PC-3 (cell line): ENCODE measurements at regions of chr5 and their contacts with region 1.

Region 1: GRCh38 chr5:164048359-164048926 is 543.0 kb downstream of the MAT2B start:
- DNase-seq: peak; percentile 23
- ATAC-seq: no peak
- H3K4me3 ChIP-seq: no peak overlapping the region
- H3K27ac ChIP-seq: no peak overlapping the region
- H3K4me1 ChIP-seq: no peaks in the 10 kb centered on the region
- H3K27me3 ChIP-seq: no peaks in the 10 kb centered on the region
- CTCF ChIP-seq: peak; percentile 45; the same call in 1 of the 2 replicates

Region 2: DNA sequence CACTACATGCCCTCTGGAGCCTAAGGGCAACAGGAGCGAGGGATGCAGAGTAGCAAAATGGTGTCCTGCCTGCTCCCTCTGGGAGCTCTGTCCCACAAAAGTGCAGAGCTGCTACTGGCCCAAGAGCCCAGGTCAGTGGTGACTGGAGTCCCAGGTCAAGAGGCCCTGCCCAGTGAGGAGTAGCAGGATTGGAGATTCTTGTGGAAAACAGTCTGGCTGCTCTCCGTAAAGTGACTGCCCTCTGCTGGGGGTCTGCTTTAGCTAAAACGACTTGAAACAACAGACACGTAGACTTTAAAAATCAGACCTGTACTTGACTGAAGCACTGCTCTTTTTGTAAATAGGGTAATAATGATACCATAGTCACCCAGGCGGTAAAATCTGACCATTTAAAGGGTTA is 374.0 kb after region 1 on chr5:
- CTCF ChIA-PET with region 1: no interaction called
- POLR2A ChIA-PET with region 1: no interaction called
- intact Hi-C with region 1: loop called (anchors 1 kb)
- DNase-seq: no peak
- ATAC-seq: no peak
- H3K4me3 ChIP-seq: no peak overlapping the region
- H3K27ac ChIP-seq: no peak overlapping the region
- H3K4me1 ChIP-seq: no peaks in the 10 kb centered on the region
- H3K27me3 ChIP-seq: no peaks in the 10 kb centered on the region
- CTCF ChIP-seq: peak; percentile 21; the same call in 1 of the 2 replicates